ENCODE measurements at regions of chr11 and their contacts with region 1.

Region 1: DNA sequence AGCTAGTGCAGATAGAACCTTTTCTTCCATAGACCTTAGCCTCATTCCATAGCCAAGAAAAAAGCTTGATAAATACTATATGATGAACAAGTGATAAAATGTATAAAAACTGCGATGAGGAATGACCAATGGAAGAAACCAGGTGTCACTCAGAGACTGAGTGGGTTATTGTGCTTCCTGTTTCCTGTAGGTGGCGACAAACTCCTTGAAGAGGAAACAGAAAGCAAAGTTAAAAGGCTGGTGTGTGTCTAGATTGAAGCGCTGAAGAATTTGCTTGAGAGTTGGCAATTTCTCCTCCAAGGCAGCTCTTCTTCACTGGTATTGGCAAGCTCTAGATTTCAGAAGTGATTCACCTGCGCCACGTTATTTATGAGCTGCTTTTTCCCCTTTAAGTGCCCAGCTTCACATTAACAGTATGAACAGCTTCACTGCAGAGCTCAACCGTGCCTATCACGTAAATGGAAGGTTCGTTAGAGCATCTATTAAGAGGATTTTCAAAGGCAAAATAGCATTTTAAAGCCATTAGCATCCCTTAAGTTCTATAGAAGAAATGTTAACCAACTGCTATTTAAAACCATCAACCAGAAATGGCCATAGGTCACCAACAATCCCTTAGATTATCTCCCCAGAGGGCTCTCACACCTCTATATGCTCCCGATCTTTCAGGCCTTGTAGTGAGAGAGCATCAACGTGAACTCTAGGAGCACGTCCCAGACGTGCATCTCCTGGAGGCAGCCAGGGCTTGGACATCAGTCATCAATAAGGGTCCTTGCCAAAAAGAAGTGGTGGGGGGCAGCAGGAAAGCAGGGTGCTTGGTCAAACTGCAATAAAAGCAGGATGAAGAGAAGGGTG is 179.4 kb downstream of the CADM1 start:
- DNase-seq: peak; percentile 79
- H3K4me3 ChIP-seq: no peak overlapping the region
- H3K27ac ChIP-seq: no peak overlapping the region
- H3K4me1 ChIP-seq: no peaks in the 10 kb centered on the region
- CTCF ChIP-seq: peak; percentile 92

Region 2: DNA sequence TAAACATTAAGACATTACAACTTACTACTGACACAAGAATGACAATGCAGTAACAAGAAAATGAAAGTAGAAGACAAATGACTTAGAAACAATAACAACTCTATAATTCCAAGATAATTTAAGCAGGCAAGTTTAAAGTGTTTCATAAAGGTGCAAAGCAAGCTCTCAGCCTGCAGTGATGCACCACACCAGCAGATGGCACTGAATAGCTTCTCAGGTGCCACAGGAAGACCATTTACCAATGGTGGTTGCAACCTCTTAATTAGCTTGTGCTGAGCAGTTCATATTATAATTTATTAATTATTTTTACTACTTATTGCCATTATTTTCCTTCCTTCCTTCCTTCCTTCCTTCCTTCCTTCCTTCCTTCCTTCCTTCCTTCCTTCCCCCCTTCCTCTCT is 585.9 kb before region 1 on chr11:
- CTCF ChIA-PET with region 1: no interaction called
- POLR2A ChIA-PET with region 1: no interaction called
- intact Hi-C with region 1: loop called (anchors 5 kb)
- DNase-seq: peak; percentile 60
- H3K4me3 ChIP-seq: no peak overlapping the region
- H3K27ac ChIP-seq: no peak overlapping the region
- H3K4me1 ChIP-seq: no peaks in the 10 kb centered on the region
- CTCF ChIP-seq: peak; percentile 88

Region 3: GRCh38 chr11:115170133-115170815 is 154.5 kb before region 1 on chr11:
- CTCF ChIA-PET with region 1: no interaction called
- POLR2A ChIA-PET with region 1: no interaction called
- intact Hi-C with region 1: loop called (anchors 5 kb)
- DNase-seq: peak; percentile 56
- H3K4me3 ChIP-seq: no peak overlapping the region
- H3K27ac ChIP-seq: no peak overlapping the region
- H3K4me1 ChIP-seq: no peaks in the 10 kb centered on the region
- CTCF ChIP-seq: peak; percentile 90

Region 4: GRCh38 chr11:115238791-115239190 is 86.0 kb before region 1 on chr11:
- CTCF ChIA-PET with region 1: no interaction called
- POLR2A ChIA-PET with region 1: no interaction called
- intact Hi-C with region 1: no loop called
- DNase-seq: no peak
- H3K4me3 ChIP-seq: no peak overlapping the region
- H3K27ac ChIP-seq: no peak overlapping the region
- H3K4me1 ChIP-seq: no peaks in the 10 kb centered on the region
- CTCF ChIP-seq: peak; percentile 31; the same call in 1 of the 2 replicates

Region 5: DNA sequence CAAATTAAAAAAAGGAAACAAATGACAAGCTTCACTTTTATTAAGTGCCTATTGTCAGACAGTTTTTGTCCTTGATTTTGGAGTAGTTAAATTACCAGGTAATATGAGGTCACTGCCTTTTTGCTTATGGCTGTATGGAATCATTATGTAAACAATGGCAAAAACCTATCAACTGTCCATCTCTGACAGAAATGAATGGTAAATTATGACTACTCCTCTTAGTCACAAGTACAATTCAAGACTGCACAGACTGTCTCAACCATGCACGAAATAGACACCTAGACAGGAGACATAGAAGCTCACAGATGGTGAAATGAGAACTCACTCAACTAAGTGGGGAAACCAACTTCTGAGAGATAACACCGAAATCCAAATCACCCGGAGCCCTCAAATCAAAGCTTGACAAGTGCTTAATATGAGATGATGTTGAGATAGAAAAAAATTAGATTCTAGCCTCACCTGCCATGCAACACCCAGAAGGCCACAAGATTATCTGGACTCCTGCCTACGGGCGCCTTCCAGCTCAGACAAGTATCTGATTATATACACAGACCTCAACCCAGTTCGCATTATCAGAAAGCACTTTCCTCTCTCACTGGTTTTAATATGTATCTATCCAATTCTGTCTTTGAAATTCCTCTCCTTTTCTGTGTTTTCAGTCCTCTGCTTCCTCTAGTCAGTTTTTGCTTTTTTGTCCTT is 19.9 kb before region 1 on chr11:
- CTCF ChIA-PET with region 1: no interaction called
- POLR2A ChIA-PET with region 1: no interaction called
- intact Hi-C with region 1: no loop called
- DNase-seq: no peak
- H3K4me3 ChIP-seq: no peak overlapping the region
- H3K27ac ChIP-seq: no peak overlapping the region
- H3K4me1 ChIP-seq: peaks cover 3% of the 10 kb centered on the region
- CTCF ChIP-seq: no peak

Region 6: GRCh38 chr11:116073854-116074837 is 749.3 kb after region 1 on chr11:
- CTCF ChIA-PET with region 1: no interaction called
- POLR2A ChIA-PET with region 1: no interaction called
- intact Hi-C with region 1: loop called (anchors 10 kb)
- DNase-seq: no peak
- H3K4me3 ChIP-seq: no peak overlapping the region
- H3K27ac ChIP-seq: no peak overlapping the region
- H3K4me1 ChIP-seq: no peaks in the 10 kb centered on the region
- CTCF ChIP-seq: no peak

Region 7: DNA sequence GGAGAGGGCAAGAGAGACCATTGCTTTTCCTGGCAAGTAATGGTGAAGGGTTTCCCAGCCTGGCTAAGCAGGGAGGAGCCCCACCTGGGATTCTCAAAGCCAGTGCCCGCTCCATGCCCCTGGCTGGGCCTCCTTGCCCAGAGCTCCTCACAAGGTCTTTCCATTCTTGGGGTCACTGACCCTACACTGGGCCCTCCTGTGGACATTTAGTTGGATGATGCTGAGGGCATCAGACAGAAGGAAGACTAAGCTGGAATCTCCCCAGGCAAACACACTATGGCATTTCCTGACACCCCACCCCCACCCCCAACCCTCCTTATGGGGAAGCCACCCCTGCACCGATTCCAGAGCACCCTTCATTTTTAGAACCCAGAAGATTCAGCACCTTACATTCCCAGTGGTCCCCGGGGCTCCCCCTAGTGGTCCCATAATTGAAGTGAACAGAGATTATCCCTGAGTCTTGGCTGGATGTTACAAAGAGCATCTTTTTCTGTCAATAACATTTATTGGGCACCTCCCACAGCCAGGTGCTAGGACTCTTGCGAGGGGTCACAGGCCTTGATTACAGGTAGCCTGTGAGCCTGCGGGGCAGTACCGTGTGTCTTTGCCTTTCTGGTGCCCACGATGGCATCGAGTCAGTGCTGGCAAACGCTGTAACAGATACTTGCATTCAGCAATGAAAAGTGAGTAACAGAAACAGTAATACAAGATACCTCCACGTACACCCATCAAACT is 899.5 kb after region 1 on chr11:
- CTCF ChIA-PET with region 1: no interaction called
- POLR2A ChIA-PET with region 1: no interaction called
- intact Hi-C with region 1: loop called (anchors 1 kb)
- DNase-seq: peak; percentile 45
- H3K4me3 ChIP-seq: no peak overlapping the region
- H3K27ac ChIP-seq: no peak overlapping the region
- H3K4me1 ChIP-seq: no peaks in the 10 kb centered on the region
- CTCF ChIP-seq: peak; percentile 85